Calu3 (cell line): ENCODE measurements at regions of chr18 and their contacts with region 1.

Region 1: DNA sequence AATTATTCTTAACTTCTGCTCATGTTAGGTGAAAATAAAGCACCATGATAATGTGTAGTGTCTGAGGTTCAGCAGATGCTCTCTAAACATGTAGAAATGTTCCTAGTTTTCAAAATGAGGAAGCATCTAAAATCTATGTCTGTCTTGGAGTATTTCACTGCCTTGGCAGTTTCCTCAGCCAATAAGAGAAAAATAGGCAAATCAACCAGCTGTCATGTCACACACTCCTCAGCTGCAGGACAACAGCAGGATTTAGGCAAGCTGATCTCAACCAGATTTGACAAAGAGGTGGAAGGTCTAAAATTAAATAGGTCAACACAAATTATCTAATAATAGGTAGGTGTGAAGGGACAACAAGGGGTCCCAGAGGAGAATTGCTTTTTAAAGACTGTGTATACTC is 164.1 kb upstream of the BOD1L2 start:
- DNase-seq: no peak
- H3K4me3 Mint-ChIP-seq: no peak overlapping the region
- H3K27ac Mint-ChIP-seq: no peak overlapping the region
- H3K4me1 Mint-ChIP-seq: peaks cover 12% of the 10 kb centered on the region
- H3K27me3 Mint-ChIP-seq: no peaks in the 10 kb centered on the region
- CTCF ChIP-seq: no peak

Region 2: DNA sequence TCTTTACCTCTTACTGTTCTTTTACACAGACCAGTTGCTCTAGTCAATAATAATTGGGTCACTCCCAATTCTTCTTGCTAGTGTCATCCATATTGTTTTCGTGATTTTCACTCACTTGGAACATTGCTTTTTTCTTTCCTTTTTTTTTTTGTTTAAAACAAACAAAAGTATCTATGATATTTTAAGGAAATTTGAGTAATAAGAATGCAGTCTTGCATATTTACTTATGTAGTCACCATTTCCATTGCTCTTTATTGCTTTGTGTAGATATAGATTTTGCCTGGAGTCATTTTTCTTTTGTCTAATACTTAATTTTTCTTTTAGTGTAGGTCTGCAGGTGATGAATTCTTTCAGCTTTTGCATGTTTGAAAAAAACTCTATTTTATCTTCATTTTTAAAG is 259.7 kb before region 1 on chr18:
- CTCF ChIA-PET with region 1: no interaction called
- intact Hi-C with region 1: no loop called
- DNase-seq: no peak
- H3K4me3 Mint-ChIP-seq: no peak overlapping the region
- H3K27ac Mint-ChIP-seq: no peak overlapping the region
- H3K4me1 Mint-ChIP-seq: peaks cover 12% of the 10 kb centered on the region
- H3K27me3 Mint-ChIP-seq: no peaks in the 10 kb centered on the region
- CTCF ChIP-seq: no peak

Region 3: DNA sequence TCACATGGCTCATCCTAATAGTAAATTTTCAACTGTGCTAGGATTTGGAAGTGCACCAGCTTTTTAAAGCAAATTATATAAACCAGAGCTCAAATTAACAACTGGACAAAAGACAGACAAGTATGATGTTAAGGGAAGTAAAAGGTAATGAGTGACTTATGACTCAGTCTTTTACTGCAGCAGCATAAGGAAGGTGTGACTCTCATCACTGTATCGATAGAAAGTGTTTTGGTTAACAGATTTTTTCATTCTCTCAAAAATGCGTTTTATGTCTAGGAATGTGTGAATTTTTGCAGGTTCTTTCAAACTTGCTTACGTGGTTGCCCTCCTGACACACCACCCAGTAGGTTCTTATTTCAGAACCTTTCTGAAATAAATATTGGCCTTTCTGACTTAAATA is 80.1 kb before region 1 on chr18:
- CTCF ChIA-PET with region 1: no interaction called
- intact Hi-C with region 1: loop called (anchors 2 kb)
- DNase-seq: no peak
- H3K4me3 Mint-ChIP-seq: peak overlapping the region; percentile 25
- H3K27ac Mint-ChIP-seq: peak overlapping the region; percentile 88
- H3K4me1 Mint-ChIP-seq: peaks cover 50% of the 10 kb centered on the region
- H3K27me3 Mint-ChIP-seq: no peaks in the 10 kb centered on the region
- CTCF ChIP-seq: no peak

Region 4: GRCh38 chr18:56952026-56952425 is 30.7 kb before region 1 on chr18:
- CTCF ChIA-PET with region 1: interaction called, 3 read pairs
- intact Hi-C with region 1: loop called (anchors 2 kb)
- DNase-seq: peak; percentile 46
- H3K4me3 Mint-ChIP-seq: no peak overlapping the region
- H3K27ac Mint-ChIP-seq: no peak overlapping the region
- H3K4me1 Mint-ChIP-seq: peaks cover 39% of the 10 kb centered on the region
- H3K27me3 Mint-ChIP-seq: no peaks in the 10 kb centered on the region
- CTCF ChIP-seq: no peak

Region 5: GRCh38 chr18:57004366-57005121 is 21.8 kb after region 1 on chr18:
- CTCF ChIA-PET with region 1: interaction called, 5 read pairs
- intact Hi-C with region 1: loop called (anchors 2 kb)
- DNase-seq: no peak
- H3K4me3 Mint-ChIP-seq: peak overlapping the region; percentile 39
- H3K27ac Mint-ChIP-seq: peak overlapping the region; percentile 87
- H3K4me1 Mint-ChIP-seq: peaks cover 34% of the 10 kb centered on the region
- H3K27me3 Mint-ChIP-seq: no peaks in the 10 kb centered on the region
- CTCF ChIP-seq: no peak

Region 6: DNA sequence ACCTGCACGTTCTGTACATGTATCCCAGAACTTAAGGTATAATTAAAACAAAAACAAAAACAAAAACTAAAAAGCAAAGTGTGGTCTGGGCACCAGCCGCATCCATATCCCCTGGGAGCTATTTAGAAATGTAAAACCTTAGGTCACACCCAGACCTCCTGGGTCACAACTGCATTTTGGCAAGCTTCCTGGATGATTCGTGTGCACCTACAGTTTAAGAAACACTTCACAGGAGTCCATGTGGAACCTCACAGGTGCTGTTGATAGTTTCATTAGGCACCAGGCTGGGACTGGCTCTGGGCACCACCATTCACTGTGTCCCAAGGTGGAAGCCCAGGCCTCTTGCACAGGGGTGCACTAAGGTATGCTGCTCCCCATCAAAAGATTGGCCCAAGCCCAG is 60.5 kb after region 1 on chr18:
- CTCF ChIA-PET with region 1: no interaction called
- intact Hi-C with region 1: no loop called
- DNase-seq: no peak
- H3K4me3 Mint-ChIP-seq: no peak overlapping the region
- H3K27ac Mint-ChIP-seq: no peak overlapping the region
- H3K4me1 Mint-ChIP-seq: no peaks in the 10 kb centered on the region
- H3K27me3 Mint-ChIP-seq: no peaks in the 10 kb centered on the region
- CTCF ChIP-seq: no peak